Breast epithelium (tissue), 4 donors: ENCODE measurements at regions of chr4 and their contacts with region 1.

Region 1: DNA sequence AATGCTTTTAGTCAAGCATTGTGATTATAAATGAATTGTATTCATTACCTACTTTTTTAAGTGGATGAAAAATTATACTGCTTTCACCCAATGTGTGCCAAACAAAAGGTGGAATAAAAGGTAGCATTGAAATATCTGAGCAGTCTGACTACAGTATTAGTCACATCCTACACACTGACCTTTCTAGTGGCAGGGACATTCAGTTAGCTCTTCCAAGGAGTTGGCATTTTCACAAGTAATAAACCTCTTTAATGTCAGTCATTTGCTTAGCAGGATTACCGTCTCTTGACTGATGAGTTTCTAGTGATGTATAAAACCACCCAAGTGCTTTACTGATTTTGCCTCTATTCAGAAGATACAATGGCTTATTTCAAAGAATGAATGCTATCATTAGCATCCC is 687.9 kb downstream of the ARAP2 start:
- DNase-seq: no peak
- H3K4me3 ChIP-seq: no peak overlapping the region
- H3K27ac ChIP-seq: no peak overlapping the region
- H3K4me1 ChIP-seq: no peaks in the 10 kb centered on the region
- H3K27me3 ChIP-seq: no peaks in the 10 kb centered on the region
- CTCF ChIP-seq: no peak
- POLR2A ChIP-seq: no peak

Region 2: GRCh38 chr4:35399912-35400311 is 156.5 kb before region 1 on chr4:
- intact Hi-C with region 1: no loop called
- DNase-seq: no peak
- H3K4me3 ChIP-seq: no peak overlapping the region
- H3K27ac ChIP-seq: no peak overlapping the region
- H3K4me1 ChIP-seq: no peaks in the 10 kb centered on the region
- H3K27me3 ChIP-seq: no peaks in the 10 kb centered on the region
- CTCF ChIP-seq: no peak
- POLR2A ChIP-seq: no peak

Region 3: DNA sequence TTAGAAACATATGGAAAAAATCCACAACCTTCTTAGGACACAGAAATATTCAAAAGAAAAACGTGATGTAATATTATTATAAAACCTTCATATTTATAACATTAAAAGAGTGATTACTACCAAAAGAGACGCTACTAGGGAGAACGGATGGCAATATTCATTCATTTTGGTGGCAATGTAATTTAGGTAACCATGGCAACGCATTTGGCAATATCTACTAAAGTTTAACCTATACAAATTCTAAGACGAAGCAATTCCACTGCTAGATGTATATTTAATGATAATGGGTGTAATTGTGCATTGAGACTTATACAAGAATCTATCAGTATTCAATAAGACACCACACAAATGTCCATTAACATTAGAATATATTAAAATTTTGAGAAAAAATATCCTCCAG is 21.4 kb before region 1 on chr4:
- intact Hi-C with region 1: loop called (anchors 2 kb)
- DNase-seq: no peak
- H3K4me3 ChIP-seq: no peak overlapping the region
- H3K27ac ChIP-seq: no peak overlapping the region
- H3K4me1 ChIP-seq: no peaks in the 10 kb centered on the region
- H3K27me3 ChIP-seq: no peaks in the 10 kb centered on the region
- CTCF ChIP-seq: no peak
- POLR2A ChIP-seq: no peak

Region 4: GRCh38 chr4:36351082-36351666 is 794.8 kb after region 1 on chr4:
- intact Hi-C with region 1: no loop called
- DNase-seq: peak in 1 of 2 donors; percentile 27
- H3K4me3 ChIP-seq: no peak overlapping the region
- H3K27ac ChIP-seq: no peak overlapping the region
- H3K4me1 ChIP-seq: no peaks in the 10 kb centered on the region
- H3K27me3 ChIP-seq: no peaks in the 10 kb centered on the region
- CTCF ChIP-seq: peak in 2 of 3 donors; percentile 42 to 43
- POLR2A ChIP-seq: no peak